PC-9 (cell line): ENCODE measurements at regions of chr9 and their contacts with region 1.

Region 1: DNA sequence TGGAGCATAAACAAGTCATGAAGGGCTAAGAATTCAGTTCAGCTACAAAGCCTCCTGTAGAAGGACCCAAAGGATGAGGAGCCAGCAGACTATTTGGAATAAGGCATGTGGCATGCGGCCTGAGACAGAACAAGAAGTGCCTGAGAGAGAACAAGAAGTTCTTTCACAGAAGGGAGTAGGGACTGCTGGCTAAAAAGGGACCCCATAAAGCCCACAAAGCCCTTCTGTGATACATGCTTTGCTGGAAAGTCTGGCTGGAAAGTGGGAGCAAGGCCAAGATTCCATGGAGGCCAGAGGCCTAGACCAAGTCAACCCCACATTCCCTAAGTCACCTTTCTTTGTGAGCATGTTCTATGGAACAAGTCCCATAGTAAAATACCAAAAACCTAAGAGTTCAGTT is 35.9 kb upstream of the UBAP2 start:
- DNase-seq: no peak
- H3K4me3 ChIP-seq: no peak overlapping the region
- H3K27ac ChIP-seq: no peak overlapping the region
- H3K4me1 ChIP-seq: no peaks in the 10 kb centered on the region
- H3K27me3 ChIP-seq: no peaks in the 10 kb centered on the region
- CTCF ChIP-seq: no peak

Region 2: GRCh38 chr9:35470894-35471293 is 1386.3 kb after region 1 on chr9:
- CTCF ChIA-PET with region 1: no interaction called
- POLR2A ChIA-PET with region 1: interaction called, 30 read pairs
- intact Hi-C with region 1: no loop called
- DNase-seq: peak in 1 of 2 experiments; percentile 44
- H3K4me3 ChIP-seq: no peak overlapping the region
- H3K27ac ChIP-seq: no peak overlapping the region
- H3K4me1 ChIP-seq: no peaks in the 10 kb centered on the region
- H3K27me3 ChIP-seq: no peaks in the 10 kb centered on the region
- CTCF ChIP-seq: no peak